Activated CD4-positive, alpha-beta memory T cell treated with anti-CD3 and anti-CD28 coated beads for 36 hours (primary cell): ENCODE measurements at regions of chr2 and their contacts with region 1.

Region 1: GRCh38 chr2:222655787-222656525 is at the start of gene FARSB:
- DNase-seq: peak; percentile 95
- H3K4me3 Mint-ChIP-seq: peak within 1 kb of the TSS; percentile 91
- H3K27ac Mint-ChIP-seq: peak within 1 kb of the TSS; percentile 98
- H3K4me1 Mint-ChIP-seq: peaks cover 37% of the 10 kb centered on the region
- H3K27me3 Mint-ChIP-seq: no peaks in the 10 kb centered on the region
- total RNA-seq, gene FARSB: 40.3 to 41.4 TPM

Region 2: DNA sequence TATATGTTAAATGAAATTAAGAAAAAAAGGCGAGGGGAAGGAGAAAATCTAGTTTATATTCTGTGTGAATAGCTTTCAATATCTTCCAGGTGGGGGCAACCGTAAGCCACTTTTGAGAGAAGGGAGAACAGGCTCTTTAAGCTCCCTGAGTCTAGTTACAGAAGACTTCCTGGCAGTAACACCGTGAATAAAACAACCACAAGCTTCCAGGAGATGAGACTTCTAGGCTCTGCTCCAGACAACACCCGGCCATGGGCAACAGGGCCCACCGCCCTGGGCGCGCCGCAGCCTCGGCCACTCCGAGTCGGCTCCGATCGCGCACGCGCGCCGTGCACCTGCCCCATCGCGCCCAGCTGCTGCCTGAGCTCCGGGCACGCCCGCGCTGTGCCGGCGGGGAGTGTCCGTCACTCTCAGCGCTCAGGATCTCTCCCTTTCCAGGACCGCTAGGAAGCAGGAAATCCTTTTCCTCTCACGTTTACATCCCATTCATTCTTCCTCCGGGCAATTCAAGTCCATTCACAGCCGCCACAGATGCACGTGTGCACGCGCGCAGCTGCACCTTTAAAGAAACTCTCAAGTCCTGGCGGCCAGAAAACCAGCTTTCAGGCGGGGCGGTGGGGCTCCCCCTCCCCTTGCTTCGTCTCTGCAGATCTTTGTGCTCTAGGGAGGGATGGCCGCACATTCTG is 337.8 kb before region 1 on chr2:
- CTCF ChIA-PET with region 1: interaction called, 3 read pairs
- POLR2A ChIA-PET with region 1: no interaction called
- intact Hi-C with region 1: loop called (anchors 2 kb)
- DNase-seq: peak; percentile 64
- H3K4me3 Mint-ChIP-seq: peak overlapping the region; percentile 69
- H3K27ac Mint-ChIP-seq: no peak overlapping the region
- H3K4me1 Mint-ChIP-seq: peaks cover 9% of the 10 kb centered on the region
- H3K27me3 Mint-ChIP-seq: peaks cover 45% of the 10 kb centered on the region

Region 3: GRCh38 chr2:222424729-222425671 is 231.0 kb before region 1 on chr2:
- CTCF ChIA-PET with region 1: no interaction called
- POLR2A ChIA-PET with region 1: no interaction called
- intact Hi-C with region 1: loop called (anchors 2 kb)
- DNase-seq: peak; percentile 72
- H3K4me3 Mint-ChIP-seq: peak overlapping the region; percentile 90
- H3K27ac Mint-ChIP-seq: peak overlapping the region; percentile 85
- H3K4me1 Mint-ChIP-seq: peaks cover 61% of the 10 kb centered on the region
- H3K27me3 Mint-ChIP-seq: peaks cover 7% of the 10 kb centered on the region

Region 4: GRCh38 chr2:222690564-222691200 is 34.7 kb after region 1 on chr2:
- CTCF ChIA-PET with region 1: interaction called, 11 read pairs
- POLR2A ChIA-PET with region 1: no interaction called
- intact Hi-C with region 1: no loop called
- DNase-seq: peak; percentile 82
- H3K4me3 Mint-ChIP-seq: no peak overlapping the region
- H3K27ac Mint-ChIP-seq: no peak overlapping the region
- H3K4me1 Mint-ChIP-seq: peaks cover 14% of the 10 kb centered on the region
- H3K27me3 Mint-ChIP-seq: no peaks in the 10 kb centered on the region

Region 5: GRCh38 chr2:222792001-222792611 is 136.2 kb after region 1 on chr2:
- CTCF ChIA-PET with region 1: no interaction called
- POLR2A ChIA-PET with region 1: no interaction called
- intact Hi-C with region 1: loop called (anchors 1 kb)
- DNase-seq: no peak
- H3K4me3 Mint-ChIP-seq: no peak overlapping the region
- H3K27ac Mint-ChIP-seq: no peak overlapping the region
- H3K4me1 Mint-ChIP-seq: peaks cover 12% of the 10 kb centered on the region
- H3K27me3 Mint-ChIP-seq: no peaks in the 10 kb centered on the region

Region 6: DNA sequence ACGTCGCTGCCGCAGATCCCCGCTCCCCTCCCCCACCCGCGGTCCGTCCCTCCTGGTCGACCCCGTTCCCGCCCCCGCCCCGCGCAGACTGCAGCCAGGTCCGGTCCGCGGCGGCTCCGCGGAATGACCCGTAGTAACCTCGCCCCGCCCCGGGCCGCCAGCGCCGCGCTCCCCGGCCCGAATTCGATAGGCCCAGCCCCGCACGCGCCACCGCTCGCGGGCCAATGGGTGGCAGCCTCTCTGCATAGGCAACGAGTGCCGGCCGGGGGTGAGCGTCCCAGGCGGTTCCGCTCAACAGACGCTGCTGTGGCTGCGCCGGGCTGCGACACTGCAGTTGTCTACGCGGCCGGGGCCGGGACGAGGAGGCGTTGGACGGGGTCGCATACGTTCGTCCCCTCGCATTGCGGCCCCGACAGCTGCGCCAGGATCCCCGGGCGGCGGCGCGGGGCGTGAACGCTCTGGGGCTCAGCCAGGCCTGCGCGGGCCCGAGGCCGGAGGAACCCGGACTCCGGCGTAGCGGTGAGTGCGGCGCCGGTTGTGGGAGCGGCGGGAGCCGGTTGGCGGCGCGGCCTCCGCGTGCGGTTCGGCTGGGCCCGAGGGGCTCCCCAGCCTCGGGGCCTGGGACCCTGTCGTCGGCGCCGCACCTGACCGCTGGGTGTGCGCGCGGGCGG is 204.9 kb after region 1 on chr2 and contains the start of gene ACSL3:
- CTCF ChIA-PET with region 1: no interaction called
- POLR2A ChIA-PET with region 1: interaction called, 4 read pairs
- intact Hi-C with region 1: loop called (anchors 1 kb)
- DNase-seq: peak; percentile 95
- H3K4me3 Mint-ChIP-seq: peak within 1 kb of the TSS; percentile 71
- H3K27ac Mint-ChIP-seq: peak within 1 kb of the TSS; percentile 84
- H3K4me1 Mint-ChIP-seq: peaks cover 3% of the 10 kb centered on the region
- H3K27me3 Mint-ChIP-seq: peaks cover 5% of the 10 kb centered on the region
- total RNA-seq, gene ACSL3: 48.7 to 57.2 TPM

Region 7: DNA sequence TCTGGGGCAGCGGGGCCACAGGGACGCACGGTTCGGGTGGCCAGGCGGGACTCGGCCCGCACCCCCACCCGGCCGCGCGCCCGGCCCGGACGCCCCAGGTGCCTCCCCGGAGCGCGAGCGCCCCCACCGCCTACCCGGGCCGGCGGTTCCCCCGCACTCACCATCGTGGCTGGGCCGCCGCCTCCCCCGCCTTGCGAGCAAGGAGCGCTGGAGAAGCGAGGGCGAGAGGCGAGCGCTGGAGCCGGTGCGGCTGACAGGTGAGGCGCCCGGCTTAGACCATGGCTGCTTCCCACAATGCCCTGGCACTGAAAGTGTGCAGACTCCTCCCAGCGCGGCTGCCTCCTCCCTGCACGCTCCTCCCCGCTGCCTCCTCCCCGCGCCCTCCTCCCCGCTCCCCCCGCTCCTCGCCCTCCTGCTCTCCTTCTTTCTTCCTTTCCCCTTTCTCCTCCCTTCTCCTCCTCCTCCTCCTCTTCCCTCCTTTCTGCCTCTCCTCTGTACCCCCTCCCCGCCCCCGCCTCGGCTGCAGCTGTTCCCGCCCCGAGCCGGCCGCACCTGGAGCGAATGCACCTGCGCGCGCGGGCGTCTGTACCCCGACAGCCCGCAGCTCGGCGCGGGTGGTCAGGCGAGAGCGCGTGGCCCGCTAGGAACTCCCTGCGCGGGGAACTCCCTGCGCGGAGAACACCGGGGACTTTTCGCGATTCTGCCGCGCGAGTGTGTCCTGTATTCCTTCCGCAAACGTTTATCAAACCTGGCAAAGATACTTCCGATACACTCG is 1181.5 kb after region 1 on chr2 and contains the start of gene AP1S3:
- CTCF ChIA-PET with region 1: no interaction called
- POLR2A ChIA-PET with region 1: no interaction called
- intact Hi-C with region 1: loop called (anchors 5 kb)
- DNase-seq: peak; percentile 83
- H3K4me3 Mint-ChIP-seq: peak within 1 kb of the TSS; percentile 94
- H3K27ac Mint-ChIP-seq: no peak within 1 kb of the TSS
- H3K4me1 Mint-ChIP-seq: peaks cover 11% of the 10 kb centered on the region
- H3K27me3 Mint-ChIP-seq: no peaks in the 10 kb centered on the region
- total RNA-seq, gene AP1S3: 10.1 to 12.1 TPM